ENCODE measurements at regions of chr5 and their contacts with region 1.

Region 1: DNA sequence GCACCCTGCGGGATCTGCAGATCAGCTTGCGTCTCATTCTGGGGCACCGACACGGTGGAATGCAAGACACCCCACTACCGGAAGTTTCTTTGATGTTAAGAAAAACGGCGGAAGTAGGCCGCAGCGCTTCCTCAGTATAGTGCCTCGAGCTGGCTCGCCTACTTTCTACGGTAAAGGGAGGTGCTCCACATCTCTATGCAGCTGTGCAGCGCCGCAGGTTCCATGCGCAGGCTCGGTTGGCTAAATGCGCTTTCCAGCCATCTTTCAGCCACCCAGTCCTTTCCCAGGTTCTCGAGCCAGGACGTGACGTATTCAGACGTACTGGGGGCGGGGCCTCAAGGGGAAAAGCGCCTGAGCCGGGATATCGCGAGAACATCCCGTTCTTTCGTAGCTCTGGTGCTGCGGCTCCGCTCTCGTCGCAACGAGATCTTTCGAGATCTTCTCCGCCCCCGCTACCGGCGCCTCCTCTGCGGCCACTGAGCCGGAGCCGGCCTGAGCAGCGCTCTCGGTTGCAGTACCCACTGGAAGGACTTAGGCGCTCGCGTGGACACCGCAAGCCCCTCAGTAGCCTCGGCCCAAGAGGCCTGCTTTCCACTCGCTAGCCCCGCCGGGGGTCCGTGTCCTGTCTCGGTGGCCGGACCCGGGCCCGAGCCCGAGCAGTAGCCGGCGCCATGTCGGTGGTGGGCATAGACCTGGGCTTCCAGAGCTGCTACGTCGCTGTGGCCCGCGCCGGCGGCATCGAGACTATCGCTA is at the start of gene HSPA4:
- DNase-seq: peak; percentile 89 to 99 (median 98)
- ATAC-seq: peak; percentile 79 to 85
- H3K4me3 Mint-ChIP-seq: peak within 1 kb of the TSS; percentile 95 to 99 (median 98)
- H3K27ac Mint-ChIP-seq: peak within 1 kb of the TSS; percentile 99 to 100 (median 100)
- H3K4me1 Mint-ChIP-seq: peaks cover 21 to 61% (median 53%) of the 10 kb centered on the region in 4 donors
- H3K27me3 Mint-ChIP-seq: no peaks in the 10 kb centered on the region
- polyA plus RNA-seq, gene HSPA4: 32.8 to 40.4 (median 37.7) TPM

Region 2: GRCh38 chr5:132782101-132782500 is 269.7 kb before region 1 on chr5:
- POLR2A ChIA-PET with region 1: no interaction called
- DNase-seq: no peak
- ATAC-seq: no peak
- H3K4me3 Mint-ChIP-seq: no peak overlapping the region
- H3K27ac Mint-ChIP-seq: no peak overlapping the region
- H3K4me1 Mint-ChIP-seq: peaks cover 14 to 42% (median 22%) of the 10 kb centered on the region in 4 donors
- H3K27me3 Mint-ChIP-seq: peaks cover 16 to 65% (median 45%) of the 10 kb centered on the region in 5 donors

Region 3: DNA sequence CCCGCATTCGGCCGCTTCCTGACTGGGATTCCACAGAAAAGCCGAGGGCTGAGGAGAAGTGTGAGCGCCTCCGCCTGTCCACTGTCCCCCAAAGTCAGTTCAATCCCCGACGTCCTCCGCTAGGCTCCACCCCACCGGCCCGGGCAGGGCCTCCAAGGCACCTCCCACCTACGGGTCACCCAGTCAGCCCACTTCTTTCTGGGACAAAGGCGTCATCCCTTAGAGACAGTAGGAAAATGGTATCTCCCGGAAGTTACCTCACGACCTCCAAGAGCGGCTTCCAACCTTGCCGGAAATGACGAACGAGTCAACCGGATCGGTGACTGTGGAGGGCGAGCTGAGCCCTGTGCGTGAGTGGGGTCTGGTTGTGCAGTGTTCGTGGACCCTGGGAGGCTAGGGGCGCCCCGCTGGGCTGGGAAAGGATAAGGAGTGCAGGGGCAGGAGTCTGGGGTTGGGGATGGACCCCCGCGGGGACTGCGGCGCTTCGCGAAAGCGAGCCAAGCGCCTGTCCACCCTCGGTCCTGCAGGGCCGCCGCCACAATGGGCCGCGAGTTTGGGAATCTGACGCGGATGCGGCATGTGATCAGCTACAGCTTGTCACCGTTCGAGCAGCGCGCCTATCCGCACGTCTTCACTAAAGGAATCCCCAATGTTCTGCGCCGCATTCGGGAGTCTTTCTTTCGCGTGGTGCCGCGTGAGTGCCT is 185.3 kb before region 1 on chr5 and contains the starts of genes GDF9 and UQCRQ:
- POLR2A ChIA-PET with region 1: interaction called, 14 read pairs
- DNase-seq: peak; percentile 74 to 97 (median 92)
- ATAC-seq: peak; percentile 93 to 96
- H3K4me3 Mint-ChIP-seq: peak within 1 kb of the TSS; percentile 93 to 100 (median 99)
- H3K27ac Mint-ChIP-seq: peak within 1 kb of the TSS; percentile 98 to 100 (median 100)
- H3K4me1 Mint-ChIP-seq: peaks cover 13 to 28% (median 27%) of the 10 kb centered on the region in 4 donors
- H3K27me3 Mint-ChIP-seq: no peaks in the 10 kb centered on the region
- polyA plus RNA-seq, gene GDF9: 0.30 to 0.45 TPM in 2 of 3 donors, not detected in the other
- polyA plus RNA-seq, gene UQCRQ: 594 to 702 (median 638) TPM

Region 4: DNA sequence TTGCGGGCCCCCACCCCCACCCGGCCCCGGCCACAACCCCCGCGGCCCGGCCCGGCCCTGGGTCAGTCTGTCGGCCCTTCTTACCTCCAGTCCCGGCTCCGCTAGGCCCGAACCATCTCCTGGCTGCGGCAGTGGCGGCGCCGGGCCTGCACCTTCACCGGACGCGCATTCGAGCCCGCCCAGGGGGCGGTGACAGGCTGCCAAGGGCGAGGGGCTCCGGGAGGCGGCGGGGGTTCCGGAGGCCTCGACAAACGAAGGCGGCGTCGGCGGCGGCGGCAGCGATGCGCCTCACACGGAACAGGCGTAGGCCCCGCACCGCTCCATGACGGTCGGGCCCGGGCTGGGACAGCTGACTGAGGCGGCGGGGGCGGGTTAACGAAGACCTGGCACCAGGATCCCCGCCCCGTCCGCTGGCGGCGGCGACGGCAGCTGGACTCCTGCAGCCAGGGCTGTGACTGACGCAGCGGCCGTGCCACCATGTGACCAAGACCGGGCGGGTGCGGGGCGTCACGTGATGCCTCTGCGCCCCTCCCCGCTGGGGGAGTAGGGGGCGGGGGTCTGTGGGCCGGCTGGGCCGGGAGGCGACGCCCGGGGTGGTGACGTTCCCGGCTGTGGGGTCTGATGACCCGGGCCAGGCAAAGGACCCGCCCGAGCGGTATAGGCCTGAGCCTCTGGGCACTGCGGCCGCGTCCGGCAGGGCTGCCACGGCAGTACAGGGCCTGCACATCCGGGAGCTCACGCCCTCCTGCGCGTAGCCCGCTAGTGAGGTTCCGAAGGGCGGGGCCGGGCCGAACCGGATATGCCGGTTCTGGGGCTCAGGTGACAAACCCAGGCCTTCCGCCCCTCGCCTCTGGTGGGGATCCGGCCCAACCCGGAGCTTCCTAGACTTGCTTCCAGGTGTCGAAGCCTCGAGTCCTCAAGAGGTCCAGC is 88.3 kb before region 1 on chr5 and contains the start of gene AFF4:
- POLR2A ChIA-PET with region 1: interaction called, 69 read pairs
- DNase-seq: peak; percentile 74 to 93 (median 86)
- ATAC-seq: peak; percentile 78 to 81
- H3K4me3 Mint-ChIP-seq: peak within 1 kb of the TSS; percentile 86 to 99 (median 96)
- H3K27ac Mint-ChIP-seq: peak within 1 kb of the TSS; percentile 95 to 100 (median 98)
- H3K4me1 Mint-ChIP-seq: peaks cover 6 to 41% (median 37%) of the 10 kb centered on the region in 4 donors
- H3K27me3 Mint-ChIP-seq: no peaks in the 10 kb centered on the region
- polyA plus RNA-seq, gene AFF4: 16.5 to 20.9 (median 17.7) TPM

Region 5: GRCh38 chr5:133025804-133026663 is 25.7 kb before region 1 on chr5 and contains the start of gene ZCCHC10:
- POLR2A ChIA-PET with region 1: interaction called, 12 read pairs
- DNase-seq: peak; percentile 84 to 95 (median 88)
- ATAC-seq: peak; percentile 99 to 100
- H3K4me3 Mint-ChIP-seq: peak within 1 kb of the TSS; percentile 92 to 98 (median 95)
- H3K27ac Mint-ChIP-seq: peak within 1 kb of the TSS; percentile 86 to 98 (median 96)
- H3K4me1 Mint-ChIP-seq: peaks cover 8 to 40% (median 23%) of the 10 kb centered on the region in 4 donors
- H3K27me3 Mint-ChIP-seq: no peaks in the 10 kb centered on the region
- polyA plus RNA-seq, gene ZCCHC10: 28.7 to 36.9 (median 33.8) TPM

Region 6: DNA sequence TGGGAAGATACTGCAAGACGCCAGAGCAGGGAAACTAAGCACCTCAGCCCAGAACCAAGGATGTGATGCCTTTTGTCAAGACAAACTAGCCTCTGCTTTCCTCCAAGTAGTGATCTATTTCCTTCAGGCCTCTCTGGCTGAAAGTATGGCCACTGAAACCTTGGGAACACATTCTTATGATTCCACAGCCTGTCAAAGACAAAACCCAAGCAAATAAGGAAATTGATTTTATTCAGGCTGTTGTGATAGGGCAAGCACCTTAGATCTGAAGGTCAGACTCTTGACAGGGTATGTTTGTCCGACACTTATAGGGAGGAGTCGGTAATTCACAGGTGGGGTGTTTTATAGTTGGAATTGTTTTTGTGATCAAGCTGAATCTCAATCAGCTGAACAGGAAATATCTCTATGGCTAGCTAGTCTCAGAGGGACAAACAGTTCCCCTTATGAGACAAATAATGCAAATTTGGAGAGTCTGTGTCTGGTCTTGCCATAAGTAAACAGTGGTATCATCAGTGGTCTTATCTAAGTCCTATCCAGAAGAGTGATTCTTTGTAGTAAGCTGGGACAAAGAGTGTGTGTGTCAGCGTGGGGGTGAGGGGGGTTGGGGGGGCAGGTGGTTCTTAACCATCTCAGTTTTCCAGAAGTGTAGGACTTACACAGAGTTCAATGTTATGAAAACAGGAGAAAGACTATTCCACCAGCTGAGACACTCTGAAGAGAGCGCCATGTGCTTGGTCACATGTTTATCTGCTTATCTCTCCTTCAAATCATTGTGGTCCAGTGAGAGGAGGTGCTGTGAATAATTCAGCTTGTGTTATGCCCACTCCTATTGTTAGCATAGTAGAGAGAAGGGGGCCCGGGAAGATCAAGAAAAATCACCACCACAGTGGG is 18.7 kb before region 1 on chr5:
- POLR2A ChIA-PET with region 1: interaction called, 15 read pairs
- DNase-seq: no peak
- ATAC-seq: peak in 1 of 2 donors; percentile 44
- H3K4me3 Mint-ChIP-seq: peak overlapping the region in 1 of 10 donors; percentile 56
- H3K27ac Mint-ChIP-seq: peak overlapping the region in 3 of 10 donors; percentile 11 to 79 (median 29)
- H3K4me1 Mint-ChIP-seq: peaks cover 0 to 37% (median 0%) of the 10 kb centered on the region in 4 donors
- H3K27me3 Mint-ChIP-seq: peaks cover 0 to 17% (median 3%) of the 10 kb centered on the region in 5 donors

Region 7: DNA sequence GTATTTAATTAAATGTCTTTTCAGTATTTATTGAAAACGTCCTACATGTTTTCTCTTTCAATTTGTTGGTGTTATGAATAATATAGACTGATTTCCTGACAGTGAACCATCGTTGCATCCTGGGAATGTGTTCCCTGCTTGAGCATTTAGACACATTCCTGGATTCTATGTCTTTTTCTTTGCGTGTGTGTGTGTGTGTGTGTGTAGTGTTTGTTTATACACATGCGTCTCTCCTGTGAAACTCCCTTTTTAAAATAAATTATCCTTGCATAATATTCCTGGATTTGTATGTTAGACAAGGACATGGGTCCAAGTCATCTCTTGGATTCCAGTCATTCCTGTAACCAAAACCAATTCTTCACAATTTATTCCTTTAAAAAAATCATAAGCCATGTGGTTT is 153.4 kb after region 1 on chr5:
- POLR2A ChIA-PET with region 1: no interaction called
- DNase-seq: no peak
- ATAC-seq: no peak
- H3K4me3 Mint-ChIP-seq: no peak overlapping the region
- H3K27ac Mint-ChIP-seq: no peak overlapping the region
- H3K4me1 Mint-ChIP-seq: peaks cover 0 to 7% (median under 1%) of the 10 kb centered on the region in 4 donors
- H3K27me3 Mint-ChIP-seq: peaks cover 0 to 5% (median 0%) of the 10 kb centered on the region in 5 donors